Activated CD4-positive, alpha-beta memory T cell treated with anti-CD3 and anti-CD28 coated beads, Interleukin-2, amount 10 ng/mL, durations not matched to agents 7 days and 5 days (primary cell): ENCODE measurements at regions of chr7 and their contacts with region 1.

Region 1: GRCh38 chr7:101165075-101165957 is at the start of gene VGF:
- DNase-seq: peak; percentile 95
- H3K4me3 Mint-ChIP-seq: peak within 1 kb of the TSS; percentile 65
- H3K27ac Mint-ChIP-seq: peak within 1 kb of the TSS; percentile 14
- H3K4me1 Mint-ChIP-seq: peaks cover 46% of the 10 kb centered on the region
- H3K27me3 Mint-ChIP-seq: peaks cover 62% of the 10 kb centered on the region
- total RNA-seq, gene VGF: 0.30 to 0.33 TPM

Region 2: DNA sequence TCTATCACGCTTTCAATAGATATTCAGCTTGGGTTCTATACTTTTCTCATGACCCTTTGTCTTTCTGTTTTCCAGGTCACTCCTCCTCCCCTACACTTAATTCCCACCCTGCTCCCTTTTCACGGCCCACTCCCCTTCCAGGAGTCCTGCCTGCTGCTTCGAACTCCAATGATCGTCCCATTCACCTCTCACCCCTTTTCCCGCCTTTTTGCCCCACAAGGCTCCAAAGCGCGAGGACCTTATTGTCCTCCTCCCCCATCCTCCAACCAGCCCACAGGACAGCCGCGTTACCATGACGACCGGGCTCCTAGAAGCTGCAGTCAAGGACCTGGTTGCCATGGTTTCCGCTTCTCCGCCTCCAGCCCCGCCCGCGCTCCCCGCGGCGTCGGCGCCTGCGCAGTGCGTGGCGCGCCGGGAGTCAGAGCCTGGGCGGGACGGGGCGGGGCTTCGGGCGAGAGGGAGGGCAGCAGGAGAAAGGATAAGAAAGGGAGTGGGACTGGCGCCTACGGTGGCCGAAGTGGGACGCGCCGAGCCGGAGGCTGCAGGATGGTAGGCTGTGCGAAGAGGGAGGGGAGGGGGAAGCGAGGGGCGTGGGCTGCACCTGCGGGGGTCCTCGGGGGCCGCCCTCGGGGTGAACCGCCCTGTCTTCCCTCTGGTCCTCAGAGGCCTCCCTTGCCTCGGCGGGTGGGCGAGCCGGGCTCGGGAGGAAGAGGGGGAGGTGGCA is 11.2 kb before region 1 on chr7 and contains the start of gene AP1S1:
- CTCF ChIA-PET with region 1: interaction called, 10 read pairs
- POLR2A ChIA-PET with region 1: no interaction called
- DNase-seq: peak; percentile 95
- H3K4me3 Mint-ChIP-seq: peak within 1 kb of the TSS; percentile 79
- H3K27ac Mint-ChIP-seq: no peak within 1 kb of the TSS
- H3K4me1 Mint-ChIP-seq: peaks cover 16% of the 10 kb centered on the region
- H3K27me3 Mint-ChIP-seq: peaks cover 13% of the 10 kb centered on the region
- total RNA-seq, gene AP1S1: 46.7 to 50.0 TPM